Naive thymus-derived CD4-positive, alpha-beta T cell (primary cell): ENCODE measurements at regions of chr19 and their contacts with region 1.

Region 1: DNA sequence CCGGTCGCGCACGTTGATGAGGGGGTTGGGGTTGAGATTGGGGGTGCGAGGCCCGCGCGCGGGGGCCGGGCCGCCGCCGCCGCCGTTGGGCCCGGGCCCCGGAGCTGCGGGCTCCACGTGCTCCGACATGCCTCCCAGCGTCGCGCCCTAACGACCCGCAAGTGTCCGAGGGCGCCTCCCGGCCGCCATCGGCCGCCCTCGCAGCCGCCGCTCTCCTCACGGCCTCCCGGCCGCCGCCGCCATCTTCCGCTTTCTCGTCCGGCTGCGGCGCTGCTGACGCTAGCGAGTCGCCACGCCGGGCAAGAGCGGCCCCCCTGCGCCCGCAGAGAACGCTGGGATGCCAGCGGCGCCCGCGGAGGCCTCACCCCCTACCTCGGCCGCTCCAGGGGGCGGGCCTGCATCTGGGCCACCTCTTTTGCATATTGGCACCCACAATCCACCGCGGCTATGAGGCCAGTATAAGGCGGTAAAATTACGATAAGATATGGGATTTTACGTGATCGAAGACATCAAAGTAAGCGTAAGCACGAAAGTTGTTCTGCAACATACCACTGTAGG is at the start of gene TMEM259:
- DNase-seq: peak; percentile 92 to 99 (median 97)
- ATAC-seq: peak; percentile 94
- H3K4me3 ChIP-seq: peak within 1 kb of the TSS; percentile 79
- H3K4me3 Mint-ChIP-seq: peak within 1 kb of the TSS; percentile 85 to 98 (median 92)
- H3K27ac ChIP-seq: peak within 1 kb of the TSS; percentile 91
- H3K27ac Mint-ChIP-seq: peak within 1 kb of the TSS; percentile 99 to 100 (median 100)
- H3K4me1 ChIP-seq: peaks cover 26 to 44% of the 10 kb centered on the region in 2 donors
- H3K4me1 Mint-ChIP-seq: peaks cover 9 to 50% (median 33%) of the 10 kb centered on the region in 7 donors
- H3K27me3 ChIP-seq: no peaks in the 10 kb centered on the region
- H3K27me3 Mint-ChIP-seq: peaks cover 0 to 7% (median 0%) of the 10 kb centered on the region in 5 donors
- total RNA-seq, gene TMEM259: 189 to 347 (median 311) TPM

Region 2: GRCh38 chr19:796692-797527 is 224.0 kb before region 1 on chr19 and contains the start of gene PTBP1:
- CTCF ChIA-PET with region 1: no interaction called
- POLR2A ChIA-PET with region 1: no interaction called
- intact Hi-C with region 1: loop called (anchors 1 kb)
- DNase-seq: peak; percentile 94 to 100 (median 100)
- ATAC-seq: peak; percentile 91
- H3K4me3 ChIP-seq: peak within 1 kb of the TSS; percentile 78
- H3K4me3 Mint-ChIP-seq: peak within 1 kb of the TSS; percentile 86 to 97 (median 94)
- H3K27ac ChIP-seq: peak within 1 kb of the TSS; percentile 78
- H3K27ac Mint-ChIP-seq: peak within 1 kb of the TSS; percentile 85 to 97 (median 92)
- H3K4me1 ChIP-seq: peaks cover 29 to 31% of the 10 kb centered on the region in 2 donors
- H3K4me1 Mint-ChIP-seq: peaks cover 26 to 36% (median 32%) of the 10 kb centered on the region in 7 donors
- H3K27me3 ChIP-seq: no peaks in the 10 kb centered on the region
- H3K27me3 Mint-ChIP-seq: peaks cover 0 to 2% (median 0%) of the 10 kb centered on the region in 5 donors
- total RNA-seq, gene PTBP1: 313 to 524 (median 326) TPM

Region 3: DNA sequence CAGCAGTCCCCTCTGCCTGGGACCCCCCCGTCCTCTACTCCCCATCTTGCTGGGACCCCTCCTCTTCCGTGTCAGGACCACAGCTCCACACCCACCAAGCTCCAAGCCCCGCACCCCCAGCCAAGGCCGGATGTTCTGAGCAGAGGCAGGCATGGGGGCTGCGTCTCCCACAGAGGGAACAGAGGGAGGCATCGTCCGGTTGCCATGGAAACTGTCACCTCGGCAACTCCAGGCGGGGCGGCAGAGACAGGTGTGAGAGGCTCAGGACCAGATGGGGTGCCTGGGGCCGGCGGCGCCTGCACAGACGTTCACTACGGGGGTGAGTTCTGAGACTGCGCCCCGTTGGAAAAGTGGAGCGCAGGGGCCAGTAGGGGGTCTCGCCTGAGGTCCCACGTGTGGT is 122.3 kb before region 1 on chr19:
- CTCF ChIA-PET with region 1: no interaction called
- POLR2A ChIA-PET with region 1: no interaction called
- intact Hi-C with region 1: no loop called
- DNase-seq: peak in 5 of 9 donors; percentile 49 to 73 (median 63)
- ATAC-seq: peak; percentile 42
- H3K4me3 ChIP-seq: no peak overlapping the region
- H3K4me3 Mint-ChIP-seq: peak overlapping the region in 4 of 10 donors; percentile 16 to 35 (median 28)
- H3K27ac ChIP-seq: no peak overlapping the region
- H3K27ac Mint-ChIP-seq: peak overlapping the region in 7 of 9 donors; percentile 31 to 87 (median 74)
- H3K4me1 ChIP-seq: peaks cover 0 to 10% of the 10 kb centered on the region in 2 donors
- H3K4me1 Mint-ChIP-seq: peaks cover 0 to 32% (median 19%) of the 10 kb centered on the region in 7 donors
- H3K27me3 ChIP-seq: no peaks in the 10 kb centered on the region
- H3K27me3 Mint-ChIP-seq: no peaks in the 10 kb centered on the region

Region 4: GRCh38 chr19:1001538-1002166 is 19.3 kb before region 1 on chr19:
- CTCF ChIA-PET with region 1: interaction called, 3 read pairs
- POLR2A ChIA-PET with region 1: interaction called, 8 read pairs
- intact Hi-C with region 1: loop called in 1 of 2 experiments (anchors 1 kb)
- DNase-seq: peak; percentile 45 to 82 (median 70)
- ATAC-seq: peak; percentile 83
- H3K4me3 ChIP-seq: no peak overlapping the region
- H3K4me3 Mint-ChIP-seq: peak overlapping the region in 4 of 10 donors; percentile 21 to 75 (median 44)
- H3K27ac ChIP-seq: no peak overlapping the region
- H3K27ac Mint-ChIP-seq: peak overlapping the region in 1 of 9 donors; percentile 24
- H3K4me1 ChIP-seq: peaks cover 14 to 17% of the 10 kb centered on the region in 2 donors
- H3K4me1 Mint-ChIP-seq: peaks cover 1 to 13% (median 7%) of the 10 kb centered on the region in 7 donors
- H3K27me3 ChIP-seq: peaks cover 5 to 6% of the 10 kb centered on the region in 2 donors
- H3K27me3 Mint-ChIP-seq: peaks cover 7 to 39% (median 20%) of the 10 kb centered on the region in 5 donors

Region 5: DNA sequence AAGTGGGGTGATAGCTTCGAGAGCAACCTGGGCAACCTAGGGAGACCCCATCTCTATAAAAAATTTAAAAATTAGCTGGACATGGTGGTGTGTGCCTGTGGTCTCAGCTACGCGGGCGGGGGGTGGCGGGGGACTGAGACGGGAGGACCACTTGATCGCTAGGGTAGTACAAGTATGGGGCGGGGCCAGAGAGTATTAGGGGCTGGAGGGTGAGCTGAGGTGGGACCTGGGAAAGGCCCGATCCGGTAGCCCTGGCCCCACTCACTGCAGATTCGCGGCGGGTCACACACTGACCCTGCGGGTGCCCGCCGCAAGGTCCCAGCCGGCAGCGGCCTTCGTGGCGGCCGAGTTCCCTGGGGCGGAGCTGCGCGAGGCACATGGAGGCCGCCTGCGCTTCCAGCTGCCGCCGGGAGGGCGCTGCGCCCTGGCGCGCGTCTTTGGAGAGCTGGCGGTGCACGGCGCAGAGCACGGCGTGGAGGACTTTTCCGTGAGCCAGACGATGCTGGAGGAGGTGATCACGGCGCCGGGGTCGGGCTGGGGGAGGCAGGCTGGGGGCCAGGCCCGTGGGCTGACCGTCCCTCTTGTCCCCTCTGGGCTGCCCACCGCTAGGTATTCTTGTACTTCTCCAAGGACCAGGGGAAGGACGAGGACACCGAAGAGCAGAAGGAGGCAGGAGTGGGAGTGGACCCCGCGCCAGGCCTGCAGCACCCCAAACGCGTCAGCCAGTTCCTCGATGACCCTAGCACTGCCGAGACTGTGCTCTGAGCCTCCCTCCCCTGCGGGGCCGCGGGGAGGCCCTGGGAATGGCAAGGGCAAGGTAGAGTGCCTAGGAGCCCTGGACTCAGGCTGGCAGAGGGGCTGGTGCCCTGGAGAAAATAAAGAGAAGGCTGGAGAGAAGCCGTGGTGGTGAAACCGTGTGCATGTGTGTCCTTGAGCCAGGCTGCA is 44.0 kb after region 1 on chr19:
- CTCF ChIA-PET with region 1: interaction called, 4 read pairs
- POLR2A ChIA-PET with region 1: interaction called, 495 read pairs
- intact Hi-C with region 1: loop called (anchors 1 to 5 kb)
- DNase-seq: peak; percentile 60 to 82 (median 72)
- ATAC-seq: peak; percentile 47
- H3K4me3 ChIP-seq: peak overlapping the region; percentile 27
- H3K4me3 Mint-ChIP-seq: peak overlapping the region; percentile 59 to 99 (median 68)
- H3K27ac ChIP-seq: peak overlapping the region; percentile 99
- H3K27ac Mint-ChIP-seq: peak overlapping the region; percentile 40 to 92 (median 71)
- H3K4me1 ChIP-seq: peaks cover 32 to 38% of the 10 kb centered on the region in 2 donors
- H3K4me1 Mint-ChIP-seq: peaks cover 20 to 42% (median 33%) of the 10 kb centered on the region in 7 donors
- H3K27me3 ChIP-seq: no peaks in the 10 kb centered on the region
- H3K27me3 Mint-ChIP-seq: no peaks in the 10 kb centered on the region

Region 6: DNA sequence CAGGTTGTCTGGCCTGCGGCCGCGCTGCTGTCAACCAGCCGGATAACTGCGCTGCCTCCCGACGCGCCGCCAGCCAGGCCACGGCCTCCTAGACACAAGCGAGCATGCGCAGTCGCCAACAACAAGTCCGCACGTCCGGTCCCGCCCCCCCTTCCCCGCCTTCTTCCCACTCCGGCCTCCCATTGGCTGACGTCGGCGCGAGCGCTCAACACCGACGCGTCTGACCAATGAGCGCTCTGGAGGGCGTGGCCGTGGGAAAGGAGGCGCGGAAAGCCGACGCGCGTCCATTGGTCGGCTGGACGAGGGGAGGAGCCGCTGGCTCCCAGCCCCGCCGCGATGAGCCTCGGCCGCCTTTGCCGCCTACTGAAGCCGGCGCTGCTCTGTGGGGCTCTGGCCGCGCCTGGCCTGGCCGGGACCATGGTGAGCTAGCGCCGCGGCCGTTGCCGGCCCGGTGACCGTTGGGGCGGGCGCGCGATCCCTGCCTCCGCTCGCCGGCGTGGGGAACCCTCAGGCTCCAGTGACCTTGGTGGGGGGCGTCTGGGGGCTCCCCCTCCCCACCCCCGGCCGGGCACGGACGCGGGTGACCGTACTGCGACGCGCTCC is 82.9 kb after region 1 on chr19 and contains the start of gene GPX4:
- CTCF ChIA-PET with region 1: no interaction called
- POLR2A ChIA-PET with region 1: interaction called, 4 read pairs
- intact Hi-C with region 1: loop called in 1 of 2 experiments (anchors 1 kb)
- DNase-seq: peak; percentile 90 to 98 (median 95)
- ATAC-seq: peak; percentile 91
- H3K4me3 ChIP-seq: peak within 1 kb of the TSS; percentile 79
- H3K4me3 Mint-ChIP-seq: peak within 1 kb of the TSS; percentile 66 to 82 (median 78)
- H3K27ac ChIP-seq: peak within 1 kb of the TSS; percentile 100
- H3K27ac Mint-ChIP-seq: peak within 1 kb of the TSS; percentile 79 to 96 (median 93)
- H3K4me1 ChIP-seq: peaks cover 13 to 18% of the 10 kb centered on the region in 2 donors
- H3K4me1 Mint-ChIP-seq: peaks cover 17 to 48% (median 36%) of the 10 kb centered on the region in 7 donors
- H3K27me3 ChIP-seq: no peaks in the 10 kb centered on the region
- H3K27me3 Mint-ChIP-seq: no peaks in the 10 kb centered on the region
- total RNA-seq, gene GPX4: 122 to 235 (median 194) TPM

Region 7: GRCh38 chr19:1205114-1206062 is 184.4 kb after region 1 on chr19 and contains the start of gene STK11:
- CTCF ChIA-PET with region 1: no interaction called
- POLR2A ChIA-PET with region 1: interaction called, 4 read pairs
- intact Hi-C with region 1: loop called in 1 of 2 experiments (anchors 1 kb)
- DNase-seq: peak; percentile 98 to 100 (median 99)
- ATAC-seq: peak; percentile 97
- H3K4me3 ChIP-seq: peak within 1 kb of the TSS; percentile 81
- H3K4me3 Mint-ChIP-seq: peak within 1 kb of the TSS; percentile 92 to 98 (median 94)
- H3K27ac ChIP-seq: peak within 1 kb of the TSS; percentile 74
- H3K27ac Mint-ChIP-seq: peak within 1 kb of the TSS; percentile 85 to 94 (median 88)
- H3K4me1 ChIP-seq: peaks cover 27 to 34% of the 10 kb centered on the region in 2 donors
- H3K4me1 Mint-ChIP-seq: peaks cover 15 to 45% (median 29%) of the 10 kb centered on the region in 7 donors
- H3K27me3 ChIP-seq: no peaks in the 10 kb centered on the region
- H3K27me3 Mint-ChIP-seq: no peaks in the 10 kb centered on the region
- total RNA-seq, gene STK11: 67.7 to 91.3 (median 71.6) TPM

Region 8: GRCh38 chr19:1275260-1275975 is 254.5 kb after region 1 on chr19 and contains the start of gene FAM174C:
- CTCF ChIA-PET with region 1: no interaction called
- POLR2A ChIA-PET with region 1: interaction called, 3 read pairs
- intact Hi-C with region 1: loop called in 1 of 2 experiments (anchors 2 kb)
- DNase-seq: peak; percentile 90 to 97 (median 96)
- ATAC-seq: peak; percentile 90
- H3K4me3 ChIP-seq: peak within 1 kb of the TSS; percentile 75
- H3K4me3 Mint-ChIP-seq: peak within 1 kb of the TSS; percentile 79 to 93 (median 88)
- H3K27ac ChIP-seq: peak within 1 kb of the TSS; percentile 93
- H3K27ac Mint-ChIP-seq: peak within 1 kb of the TSS; percentile 62 to 98 (median 95)
- H3K4me1 ChIP-seq: peaks cover 46 to 60% of the 10 kb centered on the region in 2 donors
- H3K4me1 Mint-ChIP-seq: peaks cover 40 to 60% (median 48%) of the 10 kb centered on the region in 7 donors
- H3K27me3 ChIP-seq: no peaks in the 10 kb centered on the region
- H3K27me3 Mint-ChIP-seq: no peaks in the 10 kb centered on the region
- total RNA-seq, gene FAM174C: 31.7 to 57.3 (median 47.7) TPM

Region 9: DNA sequence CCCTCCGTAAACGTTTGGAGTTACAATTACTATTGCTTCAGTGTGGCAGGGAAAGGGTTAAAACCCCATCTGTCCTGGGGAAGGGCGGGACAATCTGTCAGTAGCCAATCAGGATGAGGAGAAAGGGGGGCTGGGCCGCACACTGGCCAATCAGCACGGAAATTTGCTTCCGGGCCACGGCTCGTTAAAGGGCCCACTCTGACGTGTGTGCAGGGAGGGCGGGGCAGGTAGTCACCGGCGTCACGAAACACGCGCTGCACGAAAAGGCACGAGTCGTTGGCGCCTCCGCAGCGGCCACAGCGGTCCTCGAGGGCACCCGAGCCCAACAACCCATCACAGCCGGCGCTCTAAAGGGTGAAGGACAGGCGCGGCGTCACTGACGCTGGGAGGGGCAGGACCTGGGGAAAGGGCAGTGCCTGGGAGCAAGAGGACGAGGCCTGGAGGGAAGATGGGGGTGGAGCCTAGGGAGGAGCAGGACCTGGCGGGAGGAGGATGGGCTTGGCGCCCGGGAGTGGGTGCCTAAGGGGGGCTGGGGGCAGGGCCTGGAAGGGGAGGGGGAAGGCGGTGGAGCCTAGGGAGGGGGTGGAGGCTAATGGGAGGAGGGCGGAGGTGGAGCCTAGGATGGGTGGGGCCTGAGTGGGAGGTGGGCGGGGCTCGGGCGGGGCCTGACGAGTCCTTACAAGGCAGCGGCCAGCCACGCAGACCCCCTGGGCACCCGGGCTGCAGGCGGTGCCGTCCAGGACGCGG is 487.0 kb after region 1 on chr19:
- CTCF ChIA-PET with region 1: no interaction called
- POLR2A ChIA-PET with region 1: no interaction called
- intact Hi-C with region 1: no loop called
- DNase-seq: peak; percentile 76 to 96 (median 94)
- ATAC-seq: peak; percentile 97
- H3K4me3 ChIP-seq: peak overlapping the region; percentile 48
- H3K4me3 Mint-ChIP-seq: peak overlapping the region; percentile 75 to 92 (median 86)
- H3K27ac ChIP-seq: peak overlapping the region; percentile 79
- H3K27ac Mint-ChIP-seq: peak overlapping the region; percentile 87 to 96 (median 92)
- H3K4me1 ChIP-seq: peaks cover 4 to 18% of the 10 kb centered on the region in 2 donors
- H3K4me1 Mint-ChIP-seq: peaks cover 7 to 41% (median 27%) of the 10 kb centered on the region in 7 donors
- H3K27me3 ChIP-seq: peaks cover 0 to 2% of the 10 kb centered on the region in 2 donors
- H3K27me3 Mint-ChIP-seq: peaks cover 0 to 41% (median 2%) of the 10 kb centered on the region in 5 donors